ENCODE measurements at regions of chr14 and their contacts with region 1.

Region 1: DNA sequence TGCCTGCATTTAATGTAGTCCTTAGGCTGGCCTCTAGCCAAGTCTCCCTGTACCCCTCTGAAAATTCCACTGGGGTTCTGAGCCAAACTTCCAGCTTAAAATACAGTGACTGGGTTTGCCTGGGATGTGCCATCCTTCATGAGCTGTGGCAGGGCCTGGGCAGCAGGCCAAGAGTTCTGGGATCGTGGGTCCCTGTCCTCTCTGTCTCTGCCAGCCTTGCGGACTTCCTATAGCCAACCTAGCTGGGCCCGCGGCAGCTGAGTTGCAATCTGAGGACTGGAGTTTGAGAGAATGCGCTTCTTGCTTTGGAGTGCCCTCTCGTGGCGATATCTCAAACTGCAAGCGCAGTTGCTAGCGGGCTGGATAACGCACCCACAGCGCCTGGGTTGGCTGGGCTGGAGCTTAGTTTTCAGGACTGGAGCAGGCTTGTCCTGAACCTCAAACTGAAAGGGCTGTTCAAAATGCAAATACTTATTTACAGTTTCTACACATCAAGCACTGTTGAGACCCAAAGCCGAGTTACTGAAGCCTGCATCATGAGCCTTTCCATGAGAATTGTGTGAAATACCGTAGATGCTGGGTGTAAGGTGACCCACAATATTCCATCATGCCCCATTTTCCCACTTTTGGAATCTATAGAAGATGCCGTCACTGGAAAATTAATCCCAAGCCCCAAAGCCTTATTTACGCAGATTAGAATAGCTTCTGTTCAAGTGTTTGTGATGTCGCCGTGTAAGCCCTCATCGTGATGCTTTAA is 7.3 kb upstream of the IFI27L2 start:
- DNase-seq: peak; percentile 82 to 94 (median 89)
- H3K4me3 ChIP-seq: peak overlapping the region in 2 of 59 donors; percentile 14 to 25
- H3K27ac ChIP-seq: no peak overlapping the region
- H3K27me3 ChIP-seq: no peaks in the 10 kb centered on the region
- CTCF ChIP-seq: peak; percentile 84 to 99 (median 96)

Region 2: GRCh38 chr14:93410021-93410420 is 726.7 kb before region 1 on chr14:
- intact Hi-C with region 1: no loop called
- DNase-seq: no peak
- H3K4me3 ChIP-seq: no peak overlapping the region
- H3K27ac ChIP-seq: no peak overlapping the region
- H3K27me3 ChIP-seq: no peaks in the 10 kb centered on the region
- CTCF ChIP-seq: no peak

Region 3: DNA sequence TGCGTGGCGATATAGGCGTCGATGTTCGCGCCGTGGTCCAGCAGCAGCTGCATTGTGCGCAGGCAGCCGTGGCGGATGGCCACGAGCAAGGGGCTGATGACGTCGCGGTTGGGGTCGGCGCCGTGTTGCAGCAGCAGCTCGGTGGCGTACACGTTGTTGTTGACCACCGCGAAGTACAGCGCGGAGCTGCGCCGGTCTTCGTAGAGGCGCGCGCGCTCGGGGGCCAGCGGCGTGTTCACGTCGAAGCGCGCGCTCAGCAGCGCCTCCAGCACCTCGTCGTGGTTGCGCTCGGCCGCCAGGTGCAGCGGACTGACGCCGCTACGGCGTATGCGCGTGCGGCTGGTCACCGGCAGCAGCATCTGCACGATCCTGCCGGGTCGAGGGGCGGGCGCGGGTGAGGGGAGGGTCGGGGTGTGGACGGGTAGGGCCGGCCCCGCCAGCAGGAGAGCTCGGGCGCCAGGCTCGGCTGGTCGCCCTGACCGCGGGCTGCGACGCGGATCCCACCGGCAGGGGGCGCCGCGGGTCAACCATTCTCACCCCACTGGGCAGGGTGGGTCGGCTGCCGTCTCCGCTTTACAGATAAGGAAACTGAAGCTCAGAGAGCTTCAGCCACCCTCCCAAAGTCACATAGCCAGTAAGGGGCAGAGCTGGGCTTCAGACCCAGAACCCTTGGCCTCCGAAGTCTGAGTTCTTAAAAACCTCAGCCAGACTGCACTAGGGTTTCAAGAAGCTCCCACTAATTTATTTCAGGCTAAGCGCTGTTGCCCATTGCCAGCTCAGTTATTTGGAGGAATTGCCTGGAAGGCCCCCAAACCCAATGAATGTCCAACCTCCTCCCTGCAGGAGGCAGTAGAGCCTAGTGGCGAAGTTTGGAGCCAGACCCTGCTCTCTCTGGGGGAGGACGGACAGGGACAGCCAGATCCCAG is 197.2 kb before region 1 on chr14:
- intact Hi-C with region 1: loop called in 1 of 2 experiments (anchors 5 kb)
- DNase-seq: peak; percentile 61 to 87 (median 74)
- H3K4me3 ChIP-seq: peak overlapping the region in 57 of 59 donors; percentile 7 to 61 (median 39)
- H3K27ac ChIP-seq: no peak overlapping the region
- H3K27me3 ChIP-seq: peaks cover 0 to 10% (median 4%) of the 10 kb centered on the region in 45 donors
- CTCF ChIP-seq: peak; percentile 69 to 98 (median 93)

Region 4: GRCh38 chr14:94036313-94037050 is 100.3 kb before region 1 on chr14:
- intact Hi-C with region 1: loop called (anchors 2 to 5 kb)
- DNase-seq: peak in 8 of 10 donors; percentile 51 to 77 (median 65)
- H3K4me3 ChIP-seq: no peak overlapping the region
- H3K27ac ChIP-seq: peak overlapping the region in 21 of 59 donors; percentile 3 to 64 (median 47)
- H3K27me3 ChIP-seq: no peaks in the 10 kb centered on the region
- CTCF ChIP-seq: peak; percentile 42 to 87 (median 76)

Region 5: DNA sequence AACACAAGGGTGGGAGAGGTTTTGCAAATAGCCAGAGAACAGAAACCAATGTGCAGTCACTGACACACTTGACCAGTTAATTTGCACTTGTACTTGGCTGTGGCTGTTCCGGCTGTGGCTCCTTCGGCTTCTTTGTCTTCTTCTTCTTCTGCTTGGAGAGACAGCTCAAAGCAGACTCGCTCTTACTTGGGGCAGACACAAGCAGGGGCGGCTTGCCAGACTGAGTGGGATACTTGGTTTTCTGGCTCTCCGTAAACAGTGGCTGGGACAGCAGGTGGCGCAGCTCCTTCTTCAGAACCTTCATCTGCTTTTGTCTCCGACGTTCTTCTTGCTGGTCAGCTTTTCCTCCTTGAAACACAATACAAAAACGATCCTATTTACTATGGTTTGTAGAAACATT is 85.6 kb before region 1 on chr14:
- intact Hi-C with region 1: loop called in 1 of 2 experiments (anchors 5 kb)
- DNase-seq: peak; percentile 54 to 89 (median 80)
- H3K4me3 ChIP-seq: peak overlapping the region in 1 of 59 donors; percentile 17
- H3K27ac ChIP-seq: peak overlapping the region in 46 of 59 donors; percentile 1 to 75 (median 44)
- H3K27me3 ChIP-seq: no peaks in the 10 kb centered on the region
- CTCF ChIP-seq: peak; percentile 27 to 79 (median 64)

Region 6: GRCh38 chr14:94173885-94174603 is 37.3 kb after region 1 on chr14 and contains the start of gene PPP4R4:
- intact Hi-C with region 1: loop called (anchors 5 kb)
- DNase-seq: peak; percentile 56 to 87 (median 74)
- H3K4me3 ChIP-seq: peak within 1 kb of the TSS; percentile 62 to 93 (median 80)
- H3K27ac ChIP-seq: peak within 1 kb of the TSS in 51 of 59 donors; percentile 3 to 84 (median 66)
- H3K27me3 ChIP-seq: peaks cover 0 to 7% (median 0%) of the 10 kb centered on the region in 45 donors
- CTCF ChIP-seq: peak in 4 of 56 donors; percentile 2 to 19 (median 16)
- total RNA-seq, gene PPP4R4: 9.9 to 65.6 (median 28.7) TPM

Region 7: DNA sequence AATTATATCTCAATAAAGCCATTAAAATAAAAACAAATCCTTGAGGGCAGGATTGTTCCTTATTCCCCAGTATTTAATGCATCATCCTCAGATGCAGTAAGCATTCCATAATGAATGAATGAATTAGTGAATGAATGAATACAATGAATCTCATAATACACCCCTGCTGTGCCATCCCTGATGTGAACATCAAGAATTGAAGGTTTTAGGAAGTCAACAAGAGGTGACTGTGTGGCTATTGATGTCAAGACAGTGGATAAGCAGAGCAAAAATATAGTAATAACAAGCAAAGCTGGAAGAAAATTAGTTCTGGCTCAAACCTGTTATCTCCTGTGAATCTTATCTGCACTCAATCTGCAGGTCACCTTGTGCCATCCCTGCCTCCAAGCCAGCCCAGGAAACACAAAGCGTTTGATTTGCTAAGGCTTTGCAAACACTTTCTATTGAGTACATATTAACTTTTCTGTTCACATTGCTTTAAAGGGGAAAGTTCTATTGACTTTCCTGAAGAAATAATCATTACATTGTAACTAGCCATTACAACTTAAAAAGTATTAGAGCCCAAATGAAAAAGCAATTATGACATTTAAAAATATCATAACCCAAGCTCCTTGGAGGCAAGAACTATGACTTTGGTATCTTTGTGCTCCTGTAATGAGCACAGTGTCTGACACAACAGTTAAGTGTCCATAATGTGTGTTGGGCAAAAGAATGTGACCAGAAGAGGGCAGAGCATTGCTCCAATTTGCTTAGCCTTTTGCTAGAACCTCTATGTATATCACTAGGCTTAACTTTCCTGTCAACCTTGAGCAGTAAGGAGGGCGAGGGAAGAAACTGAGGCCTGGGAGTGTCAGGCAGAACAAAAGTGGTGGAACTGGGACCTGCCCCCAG is 500.0 kb after region 1 on chr14:
- intact Hi-C with region 1: no loop called
- DNase-seq: no peak
- H3K4me3 ChIP-seq: no peak overlapping the region
- H3K27ac ChIP-seq: no peak overlapping the region
- H3K27me3 ChIP-seq: peaks cover 0 to 10% (median 0%) of the 10 kb centered on the region in 45 donors
- CTCF ChIP-seq: no peak